Right cardiac atrium (tissue), 5 donors: ENCODE measurements at regions of chr1 and their contacts with region 1.

Region 1: GRCh38 chr1:115595279-115596079 is 46.3 kb upstream of the VANGL1 start:
- DNase-seq: peak; percentile 94 to 97 (median 95)
- ATAC-seq: peak; percentile 94 to 97
- H3K4me3 ChIP-seq: no peak overlapping the region
- H3K27ac ChIP-seq: no peak overlapping the region
- H3K4me1 ChIP-seq: peaks cover 5% of the 10 kb centered on the region
- H3K27me3 ChIP-seq: no peaks in the 10 kb centered on the region

Region 2: GRCh38 chr1:115545791-115546733 is 49.4 kb before region 1 on chr1:
- intact Hi-C with region 1: loop called in 1 of 4 experiments (anchors 5 kb)
- DNase-seq: peak; percentile 21 to 58 (median 57)
- ATAC-seq: peak; percentile 82 to 88
- H3K4me3 ChIP-seq: no peak overlapping the region
- H3K27ac ChIP-seq: no peak overlapping the region
- H3K4me1 ChIP-seq: no peaks in the 10 kb centered on the region
- H3K27me3 ChIP-seq: no peaks in the 10 kb centered on the region

Region 3: GRCh38 chr1:115781343-115781742 is 185.9 kb after region 1 on chr1:
- intact Hi-C with region 1: no loop called
- DNase-seq: no peak
- ATAC-seq: no peak
- H3K4me3 ChIP-seq: no peak overlapping the region
- H3K27ac ChIP-seq: no peak overlapping the region
- H3K4me1 ChIP-seq: no peaks in the 10 kb centered on the region
- H3K27me3 ChIP-seq: no peaks in the 10 kb centered on the region